Caco-2 (cell line): ENCODE measurements at regions of chr4 and their contacts with region 1.

Region 1: DNA sequence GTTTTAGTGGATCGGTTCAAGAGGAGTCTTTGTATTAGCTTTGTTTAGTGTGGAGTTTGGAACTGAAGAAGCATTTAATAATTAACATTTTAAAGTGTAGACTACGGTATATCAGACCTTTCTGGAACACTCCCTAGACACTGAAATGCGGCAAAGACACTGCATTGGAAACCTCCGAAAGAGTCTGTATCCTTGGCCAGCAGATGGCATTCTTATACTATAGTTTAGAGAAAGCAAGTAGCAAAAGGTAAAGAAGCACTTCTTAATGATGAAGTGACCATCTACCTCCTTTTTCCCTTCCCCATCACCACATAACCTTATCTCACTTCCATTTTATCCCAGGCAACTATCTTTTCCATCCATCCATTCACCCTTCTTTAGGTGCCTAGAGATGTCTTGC is 7.6 kb downstream of the FABP2 start:
- DNase-seq: peak in 1 of 2 experiments; percentile 60
- H3K4me3 ChIP-seq: no peak overlapping the region
- H3K4me3 Mint-ChIP-seq: no peak overlapping the region
- H3K27ac Mint-ChIP-seq: no peak overlapping the region
- H3K4me1 ChIP-seq: no peaks in the 10 kb centered on the region
- H3K4me1 Mint-ChIP-seq: no peaks in the 10 kb centered on the region
- H3K27me3 ChIP-seq: no peaks in the 10 kb centered on the region
- H3K27me3 Mint-ChIP-seq: no peaks in the 10 kb centered on the region
- CTCF ChIP-seq: peak in 1 of 2 experiments; percentile 49

Region 2: GRCh38 chr4:118981839-118982381 is 332.4 kb before region 1 on chr4:
- CTCF ChIA-PET with region 1: no interaction called
- POLR2A ChIA-PET with region 1: no interaction called
- intact Hi-C with region 1: loop called (anchors 1 kb)
- DNase-seq: peak; percentile 52 to 70
- H3K4me3 ChIP-seq: no peak overlapping the region
- H3K4me3 Mint-ChIP-seq: no peak overlapping the region
- H3K27ac Mint-ChIP-seq: no peak overlapping the region
- H3K4me1 ChIP-seq: no peaks in the 10 kb centered on the region
- H3K4me1 Mint-ChIP-seq: no peaks in the 10 kb centered on the region
- H3K27me3 ChIP-seq: no peaks in the 10 kb centered on the region
- H3K27me3 Mint-ChIP-seq: no peaks in the 10 kb centered on the region
- CTCF ChIP-seq: peak; percentile 62 to 75

Region 3: DNA sequence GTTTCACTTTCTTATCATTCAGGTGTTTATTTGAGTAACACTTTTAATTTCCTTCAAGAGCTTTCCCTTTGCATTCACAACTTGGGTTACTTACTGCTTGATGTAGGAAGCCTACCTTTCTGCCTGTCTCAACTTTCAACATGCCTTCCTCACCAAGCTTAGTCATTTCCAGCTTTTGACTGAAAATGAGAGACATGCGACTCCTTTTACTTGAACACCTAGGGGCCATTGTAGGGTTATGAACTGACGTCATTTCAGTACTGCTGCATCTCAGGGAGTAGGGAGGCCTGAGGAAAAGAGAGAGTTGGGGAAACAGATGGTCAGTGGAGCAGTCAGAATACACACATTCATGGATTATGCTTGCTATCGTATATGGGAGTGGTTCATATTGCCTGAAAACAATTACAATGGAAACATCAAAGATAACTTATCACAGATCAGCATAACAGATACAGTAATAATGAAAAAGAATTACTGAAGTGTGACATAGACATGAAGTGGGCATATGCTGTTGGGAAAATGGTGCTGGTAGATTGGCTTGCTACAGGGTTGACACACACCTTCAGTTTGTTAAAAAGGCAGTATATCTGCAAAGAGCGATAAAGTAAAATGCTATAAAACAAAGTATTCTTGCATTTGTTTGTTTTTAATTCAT is 76.2 kb before region 1 on chr4:
- CTCF ChIA-PET with region 1: no interaction called
- POLR2A ChIA-PET with region 1: no interaction called
- intact Hi-C with region 1: no loop called
- DNase-seq: no peak
- H3K4me3 ChIP-seq: no peak overlapping the region
- H3K4me3 Mint-ChIP-seq: no peak overlapping the region
- H3K27ac Mint-ChIP-seq: no peak overlapping the region
- H3K4me1 ChIP-seq: no peaks in the 10 kb centered on the region
- H3K4me1 Mint-ChIP-seq: peaks cover 16% of the 10 kb centered on the region
- H3K27me3 ChIP-seq: no peaks in the 10 kb centered on the region
- H3K27me3 Mint-ChIP-seq: no peaks in the 10 kb centered on the region
- CTCF ChIP-seq: no peak

Region 4: DNA sequence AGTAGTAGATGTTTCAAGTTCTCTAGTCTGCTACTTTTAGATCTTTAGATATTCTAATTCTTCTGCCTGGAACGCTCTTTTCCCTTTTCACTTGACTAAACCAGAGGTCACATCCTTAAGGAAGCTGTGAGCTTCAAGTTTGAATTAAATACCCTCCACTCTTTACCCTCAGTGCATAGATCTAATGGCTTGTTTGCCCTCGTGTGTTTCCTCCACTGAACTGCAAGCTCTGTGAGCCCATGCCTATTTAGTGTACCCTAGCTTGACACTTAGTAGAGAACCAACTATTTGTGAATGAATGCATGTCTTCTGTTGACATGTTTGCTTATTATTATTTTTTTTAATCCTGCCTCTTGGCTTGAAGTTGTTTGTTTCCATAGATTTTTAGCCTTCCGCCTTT is 176.0 kb after region 1 on chr4:
- CTCF ChIA-PET with region 1: no interaction called
- POLR2A ChIA-PET with region 1: no interaction called
- intact Hi-C with region 1: loop called (anchors 1 kb)
- DNase-seq: peak in 1 of 2 experiments; percentile 25
- H3K4me3 ChIP-seq: no peak overlapping the region
- H3K4me3 Mint-ChIP-seq: no peak overlapping the region
- H3K27ac Mint-ChIP-seq: no peak overlapping the region
- H3K4me1 ChIP-seq: no peaks in the 10 kb centered on the region
- H3K4me1 Mint-ChIP-seq: no peaks in the 10 kb centered on the region
- H3K27me3 ChIP-seq: no peaks in the 10 kb centered on the region
- H3K27me3 Mint-ChIP-seq: no peaks in the 10 kb centered on the region
- CTCF ChIP-seq: peak in 1 of 2 experiments; percentile 47

Region 5: GRCh38 chr4:119559044-119559647 is 244.8 kb after region 1 on chr4:
- CTCF ChIA-PET with region 1: no interaction called
- POLR2A ChIA-PET with region 1: no interaction called
- intact Hi-C with region 1: loop called (anchors 2 kb)
- DNase-seq: peak in 1 of 2 experiments; percentile 16
- H3K4me3 ChIP-seq: no peak overlapping the region
- H3K4me3 Mint-ChIP-seq: no peak overlapping the region
- H3K27ac Mint-ChIP-seq: no peak overlapping the region
- H3K4me1 ChIP-seq: no peaks in the 10 kb centered on the region
- H3K4me1 Mint-ChIP-seq: no peaks in the 10 kb centered on the region
- H3K27me3 ChIP-seq: no peaks in the 10 kb centered on the region
- H3K27me3 Mint-ChIP-seq: no peaks in the 10 kb centered on the region
- CTCF ChIP-seq: peak; percentile 29 to 38

Region 6: DNA sequence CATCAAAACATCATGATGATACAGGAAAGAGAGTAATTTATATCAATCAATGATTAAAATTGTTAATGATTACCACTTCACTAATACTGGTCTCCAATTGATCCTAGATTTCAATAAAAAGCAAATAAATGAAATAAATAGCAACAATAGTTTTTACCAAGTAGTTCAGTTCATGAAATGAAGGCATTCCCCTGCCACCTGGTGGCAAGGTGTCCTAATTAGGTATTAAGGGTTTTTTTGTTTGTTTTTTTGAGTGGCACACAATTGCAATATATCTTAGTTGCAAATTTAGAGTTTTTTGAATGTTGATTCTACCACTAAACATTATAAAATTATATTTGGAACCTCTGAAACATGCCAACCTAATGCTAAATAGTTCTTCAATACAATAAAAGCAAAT is 471.6 kb after region 1 on chr4:
- CTCF ChIA-PET with region 1: no interaction called
- POLR2A ChIA-PET with region 1: no interaction called
- intact Hi-C with region 1: loop called (anchors 5 kb)
- DNase-seq: peak in 1 of 2 experiments; percentile 34
- H3K4me3 ChIP-seq: no peak overlapping the region
- H3K4me3 Mint-ChIP-seq: no peak overlapping the region
- H3K27ac Mint-ChIP-seq: no peak overlapping the region
- H3K4me1 ChIP-seq: no peaks in the 10 kb centered on the region
- H3K4me1 Mint-ChIP-seq: no peaks in the 10 kb centered on the region
- H3K27me3 ChIP-seq: no peaks in the 10 kb centered on the region
- H3K27me3 Mint-ChIP-seq: no peaks in the 10 kb centered on the region
- CTCF ChIP-seq: peak; percentile 51 to 63

Region 7: DNA sequence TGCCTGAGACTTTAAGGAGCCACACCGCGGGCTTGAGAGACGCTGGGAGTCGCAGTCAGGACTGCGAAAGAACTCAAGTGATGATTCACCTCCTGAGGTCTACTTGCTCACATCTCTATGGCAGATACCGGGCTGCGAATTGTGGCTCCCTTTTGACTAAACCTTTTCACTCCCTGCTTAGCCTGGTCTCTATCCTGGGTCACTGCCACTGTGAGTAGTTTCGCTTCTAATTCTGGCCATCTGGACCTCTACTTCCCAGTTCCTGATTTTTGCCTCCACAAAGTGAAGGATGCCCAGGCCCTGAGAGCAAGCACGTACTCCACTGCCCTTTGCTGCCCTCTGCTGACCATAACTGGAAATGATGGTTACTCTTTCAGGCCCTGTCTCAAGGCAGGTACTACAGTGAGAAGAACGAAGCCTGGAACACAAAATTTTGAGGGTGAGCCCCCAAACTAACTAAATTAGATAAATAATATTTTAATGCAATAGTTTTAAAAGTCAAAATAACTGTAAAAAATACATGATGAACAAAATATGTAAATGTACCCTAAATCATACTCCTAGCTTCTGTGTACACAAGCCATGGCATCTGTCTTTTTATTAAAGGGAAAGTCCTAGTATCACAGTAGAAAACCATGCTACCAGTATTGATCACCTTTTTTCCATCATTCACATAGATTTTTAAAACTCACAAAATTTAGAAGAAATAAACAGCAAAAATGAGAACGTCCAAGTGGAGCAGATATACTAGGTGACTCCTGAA is 735.6 kb after region 1 on chr4:
- CTCF ChIA-PET with region 1: no interaction called
- POLR2A ChIA-PET with region 1: no interaction called
- intact Hi-C with region 1: loop called (anchors 1 kb)
- DNase-seq: peak; percentile 75 to 81
- H3K4me3 ChIP-seq: no peak overlapping the region
- H3K4me3 Mint-ChIP-seq: no peak overlapping the region
- H3K27ac Mint-ChIP-seq: peak overlapping the region; percentile 76
- H3K4me1 ChIP-seq: no peaks in the 10 kb centered on the region
- H3K4me1 Mint-ChIP-seq: no peaks in the 10 kb centered on the region
- H3K27me3 ChIP-seq: no peaks in the 10 kb centered on the region
- H3K27me3 Mint-ChIP-seq: no peaks in the 10 kb centered on the region
- CTCF ChIP-seq: peak; percentile 78